ENCODE measurements at regions of chr6 and their contacts with region 1.

Region 1: DNA sequence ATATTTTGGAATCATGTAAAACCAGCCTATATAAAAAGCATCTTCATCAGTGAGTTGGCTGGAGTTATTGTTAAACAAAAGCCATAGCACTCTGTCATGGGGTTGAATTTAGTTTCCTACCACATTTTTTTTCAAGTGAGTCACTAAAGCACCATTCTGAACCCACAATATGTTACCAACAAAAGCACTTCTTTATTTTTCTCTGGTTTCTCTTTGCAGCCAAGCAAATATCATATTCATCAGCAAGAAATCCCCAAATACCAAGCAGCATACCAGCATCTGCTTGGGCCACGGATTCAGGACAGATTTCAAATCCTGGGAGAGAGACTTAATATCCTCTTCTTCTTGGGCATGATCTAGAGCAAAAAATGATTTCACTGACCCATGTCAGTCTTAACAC is 441.4 kb downstream of the BCKDHB start:
- DNase-seq: peak; percentile 94
- ATAC-seq: peak; percentile 65
- H3K4me3 ChIP-seq: no peak overlapping the region
- H3K27ac ChIP-seq: peak overlapping the region; percentile 49; the same call in 1 of the 2 replicates
- H3K4me1 ChIP-seq: peaks cover 20% of the 10 kb centered on the region
- H3K27me3 ChIP-seq: no peaks in the 10 kb centered on the region
- CTCF ChIP-seq: no peak
- POLR2A ChIP-seq: no peak
- RAD21 ChIP-seq: no peak

Region 2: GRCh38 chr6:80425089-80425823 is 122.6 kb before region 1 on chr6:
- CTCF ChIA-PET with region 1: no interaction called
- POLR2A ChIA-PET with region 1: no interaction called
- dilution Hi-C with region 1: no loop called
- in situ Hi-C with region 1: no loop called
- intact Hi-C with region 1: loop called (anchors 2 kb)
- DNase-seq: peak; percentile 99
- ATAC-seq: peak; percentile 98
- H3K4me3 ChIP-seq: no peak overlapping the region
- H3K27ac ChIP-seq: peak overlapping the region; percentile 90; the same call in 1 of the 2 replicates
- H3K4me1 ChIP-seq: peaks cover 7% of the 10 kb centered on the region
- H3K27me3 ChIP-seq: no peaks in the 10 kb centered on the region
- CTCF ChIP-seq: peak; percentile 24; the same call in 1 of the 2 replicates
- POLR2A ChIP-seq: no peak
- RAD21 ChIP-seq: peak; percentile 16; the same call in 1 of the 2 replicates

Region 3: GRCh38 chr6:80725156-80725930 is 177.5 kb after region 1 on chr6:
- CTCF ChIA-PET with region 1: no interaction called
- POLR2A ChIA-PET with region 1: no interaction called
- dilution Hi-C with region 1: no loop called
- in situ Hi-C with region 1: no loop called
- intact Hi-C with region 1: no loop called
- DNase-seq: peak; percentile 8
- ATAC-seq: no peak
- H3K4me3 ChIP-seq: no peak overlapping the region
- H3K27ac ChIP-seq: no peak overlapping the region
- H3K4me1 ChIP-seq: peaks cover 2% of the 10 kb centered on the region; the same call in 1 of the 2 replicates
- H3K27me3 ChIP-seq: no peaks in the 10 kb centered on the region
- CTCF ChIP-seq: no peak
- POLR2A ChIP-seq: no peak
- RAD21 ChIP-seq: no peak

Measured in IMR-90 (cell line).